IMR-90 (cell line): ENCODE measurements at regions of chr3 and their contacts with region 1.

Region 1: GRCh38 chr3:5122030-5122740 is at the start of gene ARL8B:
- DNase-seq: peak; percentile 83
- ATAC-seq: peak; percentile 100
- H3K4me3 ChIP-seq: peak within 1 kb of the TSS; percentile 92
- H3K27ac ChIP-seq: peak within 1 kb of the TSS; percentile 86
- H3K4me1 ChIP-seq: peaks cover 2% of the 10 kb centered on the region; the same call in 1 of the 2 replicates
- H3K27me3 ChIP-seq: no peaks in the 10 kb centered on the region
- CTCF ChIP-seq: peak; percentile 99
- POLR2A ChIP-seq: peak; percentile 91
- RAD21 ChIP-seq: peak; percentile 62
- total RNA-seq, gene ARL8B: 47.0 and 62.5 TPM in 2 replicates

Region 2: GRCh38 chr3:4656059-4656458 is 466.1 kb before region 1 on chr3:
- CTCF ChIA-PET with region 1: no interaction called
- POLR2A ChIA-PET with region 1: no interaction called
- dilution Hi-C with region 1: no loop called
- in situ Hi-C with region 1: no loop called
- intact Hi-C with region 1: loop called (anchors 5 kb)
- DNase-seq: peak; percentile 75
- ATAC-seq: peak; percentile 98
- H3K4me3 ChIP-seq: no peak overlapping the region
- H3K27ac ChIP-seq: no peak overlapping the region
- H3K4me1 ChIP-seq: no peaks in the 10 kb centered on the region; the same call in 1 of the 2 replicates
- H3K27me3 ChIP-seq: no peaks in the 10 kb centered on the region
- CTCF ChIP-seq: peak; percentile 97
- POLR2A ChIP-seq: 0 out of 2 replicates have a peak, but pooled peaks have one; percentile 35
- RAD21 ChIP-seq: peak; percentile 99

Region 3: DNA sequence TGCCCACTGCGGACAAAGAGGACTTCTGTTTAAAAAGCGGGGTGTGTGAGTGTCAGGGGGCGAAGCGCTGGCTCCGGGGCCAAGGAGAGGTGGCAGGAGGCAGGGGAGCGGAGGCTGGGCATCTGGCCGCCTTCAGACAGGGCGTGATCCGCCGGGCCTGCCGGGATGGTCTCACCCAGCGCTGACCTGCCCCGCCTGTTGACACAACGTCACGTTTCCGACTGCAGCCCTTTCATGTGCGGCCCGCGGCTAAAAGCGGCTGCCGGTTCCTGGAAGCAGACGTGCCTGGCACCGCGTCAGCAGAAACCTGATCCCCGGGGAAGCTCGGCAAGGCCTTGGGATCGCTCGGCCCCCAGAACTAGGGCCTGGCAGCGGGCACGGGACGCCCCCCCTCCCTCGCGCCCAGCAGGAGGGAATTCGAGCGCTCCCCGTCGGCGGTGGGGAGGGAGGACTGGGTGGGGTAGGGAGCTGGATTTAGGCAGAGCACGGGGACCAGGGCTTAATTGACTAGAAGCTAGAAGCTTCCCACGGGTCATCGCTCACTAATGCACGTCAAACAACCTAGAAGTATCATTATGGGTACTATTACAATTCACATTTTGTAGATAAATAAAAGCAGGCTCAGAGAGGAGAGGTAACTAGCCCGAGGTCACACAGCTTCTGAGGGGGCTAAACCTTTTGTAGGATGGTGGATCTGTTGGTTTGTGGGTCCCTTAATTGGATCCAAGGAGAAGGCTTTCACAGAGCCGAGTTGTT is 135.2 kb before region 1 on chr3:
- CTCF ChIA-PET with region 1: no interaction called
- POLR2A ChIA-PET with region 1: no interaction called
- dilution Hi-C with region 1: no loop called
- in situ Hi-C with region 1: loop called (anchors 10 kb)
- intact Hi-C with region 1: no loop called
- DNase-seq: peak; percentile 98
- ATAC-seq: peak; percentile 82
- H3K4me3 ChIP-seq: peak overlapping the region; percentile 25
- H3K27ac ChIP-seq: peak overlapping the region; percentile 82
- H3K4me1 ChIP-seq: peaks cover 44% of the 10 kb centered on the region
- H3K27me3 ChIP-seq: no peaks in the 10 kb centered on the region
- CTCF ChIP-seq: 0 out of 2 replicates have a peak, but pooled peaks have one; percentile 15
- POLR2A ChIP-seq: no peak; the same call in 1 of the 2 replicates
- RAD21 ChIP-seq: peak; percentile 2; the same call in 1 of the 2 replicates

Region 4: DNA sequence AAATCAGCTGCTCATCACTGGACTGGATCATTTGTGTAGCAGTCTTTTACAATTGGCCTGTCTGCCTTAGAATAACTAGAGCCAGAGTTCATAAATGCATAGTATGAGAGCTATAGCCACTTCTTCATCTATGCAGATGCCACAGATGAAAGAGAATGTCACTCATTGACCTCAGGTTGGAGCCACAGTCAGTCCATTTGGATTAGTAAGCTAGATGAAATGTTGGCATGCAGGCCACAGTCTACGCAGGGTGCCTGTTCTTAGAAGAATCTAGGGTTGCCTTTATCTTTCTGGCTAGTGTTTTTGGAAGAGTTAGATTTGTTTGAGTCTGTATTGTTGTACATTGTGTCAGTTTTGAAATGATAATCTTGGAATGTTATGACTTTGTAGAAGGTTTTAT is 39.9 kb after region 1 on chr3:
- CTCF ChIA-PET with region 1: no interaction called
- POLR2A ChIA-PET with region 1: no interaction called
- dilution Hi-C with region 1: no loop called
- in situ Hi-C with region 1: no loop called
- intact Hi-C with region 1: loop called (anchors 5 kb)
- DNase-seq: peak; percentile 79
- ATAC-seq: peak; percentile 76
- H3K4me3 ChIP-seq: no peak overlapping the region
- H3K27ac ChIP-seq: no peak overlapping the region
- H3K4me1 ChIP-seq: peaks cover 10% of the 10 kb centered on the region
- H3K27me3 ChIP-seq: no peaks in the 10 kb centered on the region
- CTCF ChIP-seq: no peak
- POLR2A ChIP-seq: no peak
- RAD21 ChIP-seq: no peak

Region 5: DNA sequence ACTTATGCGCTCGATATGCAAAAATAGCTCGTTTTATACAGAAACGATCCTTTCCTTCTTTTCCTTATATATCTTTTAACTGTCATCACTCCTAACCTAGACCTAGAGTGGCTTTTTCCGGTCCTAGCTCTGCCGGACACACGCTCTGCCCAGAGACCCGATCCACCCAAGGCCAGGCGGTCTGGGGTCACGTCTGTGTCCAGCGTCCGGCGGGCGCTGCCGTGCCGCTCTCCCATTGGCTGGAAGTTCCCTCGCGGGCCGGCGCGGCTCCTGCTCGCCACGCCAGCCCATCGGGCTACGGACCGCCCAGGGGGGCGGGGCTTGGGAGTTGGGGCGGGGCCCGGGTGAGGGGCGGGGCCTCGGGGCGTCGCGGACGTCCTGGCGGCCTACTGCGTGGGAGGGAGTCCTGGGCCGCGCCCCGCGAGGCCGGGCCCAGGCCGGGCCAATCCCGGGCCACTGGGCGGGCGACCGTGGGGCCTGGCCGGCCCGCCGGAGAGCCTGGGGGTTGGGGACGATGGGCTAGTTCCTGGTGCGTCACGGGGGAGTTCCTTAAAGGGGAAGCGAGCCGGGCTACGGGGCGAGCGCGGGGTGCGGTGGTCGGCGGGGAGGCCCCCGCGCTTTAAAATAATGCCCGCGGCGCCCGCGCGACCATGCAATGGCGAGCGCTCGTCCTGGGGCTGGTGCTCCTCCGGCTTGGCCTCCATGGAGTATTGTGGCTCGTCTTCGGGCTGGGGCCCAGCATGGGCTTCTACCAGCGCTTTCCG is 65.2 kb after region 1 on chr3 and contains the start of gene EDEM1:
- CTCF ChIA-PET with region 1: no interaction called
- POLR2A ChIA-PET with region 1: no interaction called
- dilution Hi-C with region 1: no loop called
- in situ Hi-C with region 1: no loop called
- intact Hi-C with region 1: loop called (anchors 1 kb)
- DNase-seq: peak; percentile 94
- ATAC-seq: peak; percentile 95
- H3K4me3 ChIP-seq: peak within 1 kb of the TSS; percentile 94
- H3K27ac ChIP-seq: peak within 1 kb of the TSS; percentile 88
- H3K4me1 ChIP-seq: peaks cover 2% of the 10 kb centered on the region
- H3K27me3 ChIP-seq: no peaks in the 10 kb centered on the region
- CTCF ChIP-seq: no peak
- POLR2A ChIP-seq: peak; percentile 86
- RAD21 ChIP-seq: no peak
- total RNA-seq, gene EDEM1: 20.8 and 23.5 TPM in 2 replicates

Region 6: DNA sequence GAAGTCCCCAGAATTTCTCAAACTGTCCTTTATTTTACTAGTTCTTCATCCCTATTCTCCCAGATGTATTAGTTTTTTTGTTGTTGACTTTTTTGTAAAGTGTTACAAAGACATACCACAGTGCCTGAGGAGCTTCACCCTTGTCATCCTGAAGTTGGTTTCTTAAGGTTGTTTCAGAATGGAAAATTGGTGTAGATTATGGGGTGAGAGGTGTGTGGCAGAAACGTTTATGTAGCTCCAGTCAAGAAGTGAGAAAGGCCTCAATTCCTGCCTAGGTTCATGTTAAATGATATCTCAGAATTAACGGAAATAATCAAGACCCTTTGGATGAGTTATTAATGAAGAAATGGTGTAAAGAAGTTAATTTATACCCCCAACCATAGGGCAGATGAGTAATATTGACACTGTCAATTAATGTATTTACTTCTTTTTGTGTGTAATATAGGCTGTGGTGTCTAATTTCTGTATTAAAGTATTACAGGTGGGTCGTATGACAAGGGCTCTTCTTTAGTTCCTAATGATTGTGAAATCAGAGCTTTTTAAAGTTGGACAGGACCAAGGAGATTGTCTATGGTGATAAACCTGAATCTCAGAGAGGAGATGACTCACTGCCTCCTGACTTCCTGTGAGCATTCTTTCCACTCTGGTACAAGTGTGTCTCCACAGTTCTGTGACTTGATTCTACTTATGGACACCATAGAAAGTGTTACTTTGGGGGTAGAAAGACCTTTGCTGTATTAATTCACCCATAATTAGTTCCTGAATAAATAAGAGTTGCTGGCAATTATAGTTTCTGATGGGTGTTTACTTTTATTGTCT is 72.4 kb after region 1 on chr3:
- CTCF ChIA-PET with region 1: no interaction called
- POLR2A ChIA-PET with region 1: no interaction called
- dilution Hi-C with region 1: no loop called
- in situ Hi-C with region 1: no loop called
- intact Hi-C with region 1: loop called (anchors 2 kb)
- DNase-seq: peak; percentile 91
- ATAC-seq: peak; percentile 63
- H3K4me3 ChIP-seq: no peak overlapping the region
- H3K27ac ChIP-seq: no peak overlapping the region; the same call in 1 of the 2 replicates
- H3K4me1 ChIP-seq: peaks cover 26% of the 10 kb centered on the region
- H3K27me3 ChIP-seq: no peaks in the 10 kb centered on the region
- CTCF ChIP-seq: no peak
- POLR2A ChIP-seq: no peak
- RAD21 ChIP-seq: no peak